ENCODE measurements at regions of chr9 and their contacts with region 1.

Region 1: GRCh38 chr9:125407974-125408900 is 146.6 kb downstream of the GAPVD1 start:
- DNase-seq: peak; percentile 60 to 86 (median 78)
- ATAC-seq: peak; percentile 82
- H3K4me3 ChIP-seq: peak overlapping the region; percentile 29 to 58
- H3K4me3 Mint-ChIP-seq: peak overlapping the region; percentile 70
- H3K27ac ChIP-seq: no peak overlapping the region
- H3K27ac Mint-ChIP-seq: no peak overlapping the region
- H3K4me1 ChIP-seq: peaks cover 6% of the 10 kb centered on the region
- H3K4me1 Mint-ChIP-seq: peaks cover 10% of the 10 kb centered on the region
- H3K27me3 ChIP-seq: peaks cover 8 to 20% of the 10 kb centered on the region in 2 experiments
- H3K27me3 Mint-ChIP-seq: peaks cover 27% of the 10 kb centered on the region
- CTCF ChIP-seq: peak; percentile 84

Region 2: GRCh38 chr9:125418404-125418803 is 10.2 kb after region 1 on chr9:
- CTCF ChIA-PET with region 1: interaction called, 11 read pairs
- POLR2A ChIA-PET with region 1: no interaction called
- intact Hi-C with region 1: no loop called
- DNase-seq: no peak
- ATAC-seq: no peak
- H3K4me3 ChIP-seq: no peak overlapping the region
- H3K4me3 Mint-ChIP-seq: no peak overlapping the region
- H3K27ac ChIP-seq: no peak overlapping the region
- H3K27ac Mint-ChIP-seq: no peak overlapping the region
- H3K4me1 ChIP-seq: no peaks in the 10 kb centered on the region
- H3K4me1 Mint-ChIP-seq: no peaks in the 10 kb centered on the region
- H3K27me3 ChIP-seq: peaks cover 0 to 2% of the 10 kb centered on the region in 2 experiments
- H3K27me3 Mint-ChIP-seq: no peaks in the 10 kb centered on the region
- CTCF ChIP-seq: no peak

Region 3: GRCh38 chr9:125631391-125632085 is 223.3 kb after region 1 on chr9:
- CTCF ChIA-PET with region 1: interaction called, 3 read pairs
- POLR2A ChIA-PET with region 1: no interaction called
- intact Hi-C with region 1: loop called in 1 of 2 experiments (anchors 1 kb)
- DNase-seq: peak in 3 of 9 experiments; percentile 20 to 53 (median 31)
- ATAC-seq: peak; percentile 69
- H3K4me3 ChIP-seq: no peak overlapping the region
- H3K4me3 Mint-ChIP-seq: no peak overlapping the region
- H3K27ac ChIP-seq: no peak overlapping the region
- H3K27ac Mint-ChIP-seq: no peak overlapping the region
- H3K4me1 ChIP-seq: peaks cover 15% of the 10 kb centered on the region
- H3K4me1 Mint-ChIP-seq: peaks cover 67% of the 10 kb centered on the region
- H3K27me3 ChIP-seq: no peaks in the 10 kb centered on the region
- H3K27me3 Mint-ChIP-seq: no peaks in the 10 kb centered on the region
- CTCF ChIP-seq: peak; percentile 48

Region 4: DNA sequence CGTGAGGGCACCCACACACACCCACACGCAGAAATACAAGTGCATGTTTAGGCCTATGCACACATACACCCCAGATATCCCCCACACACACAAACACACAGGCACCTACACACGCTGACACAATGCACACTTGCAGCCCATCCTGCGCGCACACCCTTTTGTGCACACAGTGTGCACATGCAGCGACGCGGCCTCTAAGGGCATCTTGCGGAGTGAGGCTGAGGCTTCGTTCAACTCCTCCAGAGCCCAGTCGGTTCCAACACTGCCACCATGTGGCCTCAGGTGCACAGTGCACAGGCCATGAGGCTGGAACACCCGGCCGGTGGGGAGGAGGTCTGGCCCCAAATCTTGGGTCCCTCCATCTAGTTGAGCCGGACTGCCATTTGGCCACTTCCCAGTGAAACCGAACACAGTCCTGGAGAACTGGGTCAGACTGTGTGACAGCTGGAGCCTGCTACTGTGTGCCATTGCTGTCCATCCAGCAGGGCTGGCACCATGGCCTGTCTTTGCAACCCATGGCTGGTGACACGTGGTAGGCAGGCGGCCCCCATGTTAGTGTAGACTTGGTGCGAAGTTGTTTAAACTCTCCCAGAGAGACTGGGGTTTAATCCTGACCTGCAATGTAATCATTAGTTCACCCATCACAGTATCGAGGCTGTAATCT is 820.7 kb after region 1 on chr9:
- CTCF ChIA-PET with region 1: interaction called, 19 read pairs
- POLR2A ChIA-PET with region 1: no interaction called
- intact Hi-C with region 1: loop called (anchors 1 kb)
- DNase-seq: peak; percentile 33 to 79 (median 63)
- ATAC-seq: peak; percentile 91
- H3K4me3 ChIP-seq: no peak overlapping the region
- H3K4me3 Mint-ChIP-seq: no peak overlapping the region
- H3K27ac ChIP-seq: no peak overlapping the region
- H3K27ac Mint-ChIP-seq: no peak overlapping the region
- H3K4me1 ChIP-seq: no peaks in the 10 kb centered on the region
- H3K4me1 Mint-ChIP-seq: peaks cover 2% of the 10 kb centered on the region
- H3K27me3 ChIP-seq: peaks cover 0 to 3% of the 10 kb centered on the region in 2 experiments
- H3K27me3 Mint-ChIP-seq: peaks cover 38% of the 10 kb centered on the region
- CTCF ChIP-seq: peak; percentile 89